B cell (primary cell): ENCODE measurements at regions of chr15 and their contacts with region 1.

Region 1: DNA sequence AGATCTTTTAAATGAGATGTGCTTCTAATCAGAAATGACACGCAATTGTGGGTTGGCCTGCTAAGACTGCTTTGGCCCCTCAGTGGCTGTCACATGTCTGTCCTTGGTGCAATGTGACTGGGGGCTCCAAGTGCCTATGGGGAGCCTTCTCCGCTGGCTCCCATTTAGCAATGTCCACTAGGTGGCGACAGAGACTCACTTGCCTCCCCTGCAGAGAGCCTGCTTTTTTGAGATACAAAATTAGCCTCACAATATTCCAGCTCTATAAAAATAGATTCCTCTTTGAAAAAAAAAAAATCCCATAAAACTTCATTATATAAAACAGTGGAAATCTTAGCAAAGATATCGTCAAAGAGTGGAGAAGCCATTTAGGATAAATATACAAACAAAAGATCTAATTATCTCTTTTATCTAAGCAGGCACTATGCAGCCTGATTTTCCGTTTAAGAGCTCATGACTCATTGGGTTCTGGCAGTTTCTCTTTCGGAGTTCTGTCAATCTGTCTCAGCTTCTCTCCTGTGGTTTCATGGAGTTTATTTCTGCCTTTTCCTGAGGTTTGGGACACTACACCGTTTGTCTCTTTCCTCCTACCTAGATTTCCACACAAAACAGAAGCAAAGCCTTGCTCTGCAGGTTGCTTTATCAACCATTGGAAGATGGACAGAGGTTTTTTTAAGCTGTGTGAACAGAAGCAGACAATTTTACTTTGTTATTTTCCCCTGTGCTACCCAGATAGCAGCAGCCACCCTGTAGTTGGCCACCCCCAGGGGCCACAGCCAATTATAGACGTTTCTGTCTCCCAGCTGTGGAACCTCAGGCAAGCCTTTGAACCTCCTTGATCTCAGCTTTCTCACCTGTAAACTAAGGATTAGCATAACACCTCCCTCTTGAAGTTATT is 68.4 kb upstream of the TNFAIP8L3 start:
- DNase-seq: peak; percentile 70
- ATAC-seq: peak; percentile 51
- H3K4me3 ChIP-seq: no peak overlapping the region
- H3K4me3 Mint-ChIP-seq: no peak overlapping the region
- H3K27ac ChIP-seq: no peak overlapping the region
- H3K27ac Mint-ChIP-seq: no peak overlapping the region
- H3K4me1 ChIP-seq: no peaks in the 10 kb centered on the region
- H3K4me1 Mint-ChIP-seq: peaks cover 1% of the 10 kb centered on the region
- H3K27me3 ChIP-seq: peaks cover 0 to 6% (median 3%) of the 10 kb centered on the region in 4 experiments
- H3K27me3 Mint-ChIP-seq: peaks cover 15% of the 10 kb centered on the region
- CTCF ChIP-seq: peak; percentile 99

Region 2: GRCh38 chr15:51144021-51144532 is 19.0 kb before region 1 on chr15:
- CTCF ChIA-PET with region 1: interaction called, 35 read pairs
- POLR2A ChIA-PET with region 1: no interaction called
- intact Hi-C with region 1: no loop called
- DNase-seq: no peak
- ATAC-seq: no peak
- H3K4me3 ChIP-seq: no peak overlapping the region
- H3K4me3 Mint-ChIP-seq: no peak overlapping the region
- H3K27ac ChIP-seq: no peak overlapping the region
- H3K27ac Mint-ChIP-seq: no peak overlapping the region
- H3K4me1 ChIP-seq: no peaks in the 10 kb centered on the region
- H3K4me1 Mint-ChIP-seq: no peaks in the 10 kb centered on the region
- H3K27me3 ChIP-seq: no peaks in the 10 kb centered on the region
- H3K27me3 Mint-ChIP-seq: peaks cover 40% of the 10 kb centered on the region
- CTCF ChIP-seq: no peak

Region 3: DNA sequence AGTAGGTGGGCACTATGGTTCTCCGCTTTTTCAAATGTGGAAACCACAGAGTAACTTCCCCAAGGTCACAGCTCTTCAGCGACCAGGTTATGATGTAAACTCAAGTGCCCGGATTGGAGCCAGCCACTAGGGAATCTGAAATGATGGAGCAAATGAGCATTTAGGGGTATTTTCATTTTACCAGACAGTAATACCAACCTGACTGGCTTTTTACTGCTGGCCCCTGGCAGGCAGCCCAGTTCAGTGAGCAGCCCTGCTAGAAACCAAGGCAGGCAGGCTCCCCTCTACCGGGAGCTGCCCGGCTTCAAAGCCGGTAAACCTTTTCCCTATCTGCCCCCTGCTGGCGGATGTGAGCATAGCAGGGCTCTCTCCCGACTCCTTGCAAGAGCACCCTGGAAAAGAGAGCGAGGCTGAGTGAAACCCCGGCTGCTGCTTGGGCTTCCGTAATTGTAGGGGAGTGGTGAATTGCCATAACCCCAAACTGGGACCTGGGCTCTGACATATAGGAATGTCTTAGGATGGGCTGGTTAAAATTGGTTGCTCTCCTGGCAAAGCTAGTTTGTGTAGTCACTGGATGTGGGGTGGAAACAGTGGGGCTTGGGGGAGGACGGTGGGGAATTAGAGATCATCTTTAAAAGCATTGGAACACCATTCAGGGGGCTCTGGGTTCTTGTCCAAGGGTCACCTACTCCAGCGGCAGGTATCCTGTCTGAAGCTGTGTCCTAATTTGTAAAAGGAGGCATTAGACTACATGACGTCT is 29.6 kb after region 1 on chr15:
- CTCF ChIA-PET with region 1: interaction called, 26 read pairs
- POLR2A ChIA-PET with region 1: no interaction called
- intact Hi-C with region 1: no loop called
- DNase-seq: peak; percentile 69
- ATAC-seq: peak; percentile 39
- H3K4me3 ChIP-seq: no peak overlapping the region
- H3K4me3 Mint-ChIP-seq: no peak overlapping the region
- H3K27ac ChIP-seq: no peak overlapping the region
- H3K27ac Mint-ChIP-seq: no peak overlapping the region
- H3K4me1 ChIP-seq: peaks cover 0 to 5% of the 10 kb centered on the region in 2 donors
- H3K4me1 Mint-ChIP-seq: no peaks in the 10 kb centered on the region
- H3K27me3 ChIP-seq: peaks cover 0 to 19% (median 4%) of the 10 kb centered on the region in 4 experiments
- H3K27me3 Mint-ChIP-seq: peaks cover 44% of the 10 kb centered on the region
- CTCF ChIP-seq: peak; percentile 91

Region 4: DNA sequence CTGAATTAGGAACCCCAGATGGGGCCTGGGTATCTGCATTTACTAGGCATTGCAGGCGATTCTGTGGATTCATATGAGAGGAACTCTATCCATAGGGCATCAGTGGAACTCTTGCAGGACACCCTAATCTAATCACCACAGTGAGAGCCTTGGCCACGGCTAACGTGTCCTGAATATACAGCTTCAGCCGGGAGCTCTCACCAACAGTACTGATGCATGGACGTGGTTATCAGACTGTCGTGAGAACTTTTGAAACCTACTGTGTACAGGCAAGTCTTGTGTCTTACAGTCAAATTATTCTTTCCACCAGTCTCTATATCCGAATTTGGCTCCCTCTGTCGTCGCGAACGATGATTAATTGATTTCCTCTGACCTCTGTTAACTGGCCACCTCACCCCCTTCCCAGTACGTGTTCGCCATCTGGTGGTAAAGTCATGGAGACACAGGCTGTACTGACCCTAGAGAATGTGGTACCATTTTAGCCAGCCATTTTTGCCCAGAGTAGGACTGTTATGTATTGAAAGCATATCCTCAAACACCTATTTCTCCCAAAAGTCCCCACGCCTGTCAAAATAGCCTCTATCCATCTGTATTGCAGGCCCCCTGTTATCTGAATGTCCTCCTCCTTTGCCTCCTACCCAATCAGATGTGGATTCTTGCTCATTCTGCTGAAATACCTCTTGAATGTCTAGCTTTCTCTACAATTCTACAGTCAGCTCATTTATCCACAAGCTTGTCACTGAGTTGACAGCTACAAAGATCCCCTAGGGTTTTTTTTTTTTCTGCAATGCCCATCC is 218.1 kb after region 1 on chr15:
- CTCF ChIA-PET with region 1: interaction called, 59 read pairs
- POLR2A ChIA-PET with region 1: no interaction called
- intact Hi-C with region 1: no loop called
- DNase-seq: peak; percentile 63
- ATAC-seq: peak; percentile 62
- H3K4me3 ChIP-seq: no peak overlapping the region
- H3K4me3 Mint-ChIP-seq: no peak overlapping the region
- H3K27ac ChIP-seq: no peak overlapping the region
- H3K27ac Mint-ChIP-seq: no peak overlapping the region
- H3K4me1 ChIP-seq: no peaks in the 10 kb centered on the region
- H3K4me1 Mint-ChIP-seq: no peaks in the 10 kb centered on the region
- H3K27me3 ChIP-seq: peaks cover 0 to 3% (median 1%) of the 10 kb centered on the region in 4 experiments
- H3K27me3 Mint-ChIP-seq: peaks cover 17% of the 10 kb centered on the region
- CTCF ChIP-seq: peak; percentile 66

Region 5: DNA sequence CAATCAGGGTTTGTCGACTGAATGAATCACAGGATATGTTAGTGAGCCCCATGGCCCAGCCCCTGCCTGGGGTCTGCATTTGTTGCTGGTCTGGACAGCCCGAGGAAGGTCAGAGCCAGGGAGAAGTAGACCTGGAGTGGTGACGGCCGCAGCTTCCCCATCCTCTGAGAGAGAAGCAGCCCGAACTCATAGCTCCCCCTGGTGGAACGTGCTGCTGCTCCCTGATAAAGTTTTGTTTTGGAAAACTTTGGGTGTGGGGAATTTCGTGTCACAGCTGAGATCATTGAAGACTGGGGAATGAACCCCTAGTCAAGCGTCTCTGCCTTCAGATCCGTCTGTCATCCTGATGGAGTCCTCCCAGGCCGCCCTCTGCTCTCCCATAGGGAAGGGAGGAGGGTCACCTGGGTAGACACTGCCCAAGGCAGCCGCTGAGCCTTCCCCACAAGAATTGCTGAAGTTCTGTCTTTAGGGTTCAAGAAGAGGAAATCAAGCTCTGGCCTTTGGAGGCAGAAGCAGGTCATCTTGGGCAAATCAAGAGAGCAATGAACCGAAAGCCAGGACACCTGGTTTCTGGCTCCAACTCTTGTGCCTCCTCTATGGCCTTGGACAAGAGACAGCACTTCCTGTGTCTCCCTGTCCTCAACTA is 238.9 kb after region 1 on chr15:
- CTCF ChIA-PET with region 1: interaction called, 10 read pairs
- POLR2A ChIA-PET with region 1: no interaction called
- intact Hi-C with region 1: no loop called
- DNase-seq: peak; percentile 22
- ATAC-seq: no peak
- H3K4me3 ChIP-seq: no peak overlapping the region
- H3K4me3 Mint-ChIP-seq: no peak overlapping the region
- H3K27ac ChIP-seq: no peak overlapping the region
- H3K27ac Mint-ChIP-seq: no peak overlapping the region
- H3K4me1 ChIP-seq: no peaks in the 10 kb centered on the region
- H3K4me1 Mint-ChIP-seq: no peaks in the 10 kb centered on the region
- H3K27me3 ChIP-seq: peaks cover 0 to 12% (median 0%) of the 10 kb centered on the region in 4 experiments
- H3K27me3 Mint-ChIP-seq: peaks cover 29% of the 10 kb centered on the region
- CTCF ChIP-seq: peak; percentile 7

Region 6: GRCh38 chr15:51499379-51499976 is 336.4 kb after region 1 on chr15:
- CTCF ChIA-PET with region 1: interaction called, 21 read pairs
- POLR2A ChIA-PET with region 1: no interaction called
- intact Hi-C with region 1: no loop called
- DNase-seq: peak; percentile 23
- ATAC-seq: no peak
- H3K4me3 ChIP-seq: no peak overlapping the region
- H3K4me3 Mint-ChIP-seq: no peak overlapping the region
- H3K27ac ChIP-seq: no peak overlapping the region
- H3K27ac Mint-ChIP-seq: no peak overlapping the region
- H3K4me1 ChIP-seq: no peaks in the 10 kb centered on the region
- H3K4me1 Mint-ChIP-seq: no peaks in the 10 kb centered on the region
- H3K27me3 ChIP-seq: no peaks in the 10 kb centered on the region
- H3K27me3 Mint-ChIP-seq: no peaks in the 10 kb centered on the region
- CTCF ChIP-seq: peak; percentile 42